ENCODE measurements at regions of chr13 and their contacts with region 1.

Region 1: DNA sequence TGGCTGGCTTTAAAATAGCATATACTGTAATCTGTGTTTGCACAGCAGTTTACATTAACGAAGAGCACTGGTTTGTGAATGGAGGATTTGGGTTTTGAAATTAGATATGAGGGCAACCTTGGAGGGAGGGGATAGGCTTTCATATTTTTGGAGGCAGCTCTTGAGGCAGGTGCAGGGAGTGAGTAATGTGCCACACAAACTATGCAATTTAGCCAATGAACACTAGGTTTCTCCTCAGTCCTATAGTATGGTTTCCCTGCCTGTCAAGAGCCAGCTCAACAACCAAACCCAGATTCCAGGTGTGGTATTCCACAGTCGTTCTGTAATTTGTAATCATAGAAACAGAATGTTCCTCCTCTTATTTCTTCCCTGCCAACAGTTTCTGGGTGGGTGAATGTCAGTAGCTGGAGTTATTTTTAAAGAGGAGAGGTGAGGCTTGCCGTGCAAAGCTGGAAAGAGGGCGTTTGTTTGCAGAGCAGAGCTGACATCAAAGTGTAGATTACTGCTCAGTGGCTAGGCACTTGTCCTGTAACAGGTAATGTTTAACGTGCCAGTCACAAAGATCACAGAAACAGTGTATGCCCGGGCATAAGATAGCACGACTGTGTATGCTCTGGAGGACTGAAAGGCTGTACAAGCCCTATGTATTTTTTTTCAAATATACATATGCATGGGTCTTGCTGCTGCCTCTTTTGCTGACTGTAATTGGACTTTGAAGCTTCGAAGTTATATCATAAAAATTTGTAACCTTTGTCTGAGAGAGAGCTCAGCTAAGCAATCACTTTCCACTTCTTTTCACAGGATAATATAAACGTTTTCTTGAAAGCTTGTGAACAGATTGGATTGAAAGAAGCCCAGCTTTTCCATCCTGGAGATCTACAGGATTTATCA is 124.2 kb downstream of the LMO7 start:
- DNase-seq: peak; percentile 76
- ATAC-seq: peak; percentile 87
- H3K4me3 ChIP-seq: peak overlapping the region; percentile 67
- H3K27ac ChIP-seq: peak overlapping the region; percentile 85
- H3K4me1 ChIP-seq: peaks cover 22% of the 10 kb centered on the region
- H3K27me3 ChIP-seq: no peaks in the 10 kb centered on the region
- CTCF ChIP-seq: peak; percentile 33

Region 2: GRCh38 chr13:75445717-75446499 is 314.5 kb before region 1 on chr13:
- CTCF ChIA-PET with region 1: no interaction called
- POLR2A ChIA-PET with region 1: no interaction called
- intact Hi-C with region 1: no loop called
- DNase-seq: peak; percentile 34
- ATAC-seq: no peak
- H3K4me3 ChIP-seq: no peak overlapping the region
- H3K27ac ChIP-seq: no peak overlapping the region
- H3K4me1 ChIP-seq: peaks cover 4% of the 10 kb centered on the region; the same call in 1 of the 2 replicates
- H3K27me3 ChIP-seq: no peaks in the 10 kb centered on the region
- CTCF ChIP-seq: no peak

Region 3: GRCh38 chr13:75530536-75530935 is 229.8 kb before region 1 on chr13:
- CTCF ChIA-PET with region 1: no interaction called
- POLR2A ChIA-PET with region 1: no interaction called
- intact Hi-C with region 1: no loop called
- DNase-seq: no peak
- ATAC-seq: no peak
- H3K4me3 ChIP-seq: no peak overlapping the region
- H3K27ac ChIP-seq: no peak overlapping the region
- H3K4me1 ChIP-seq: no peaks in the 10 kb centered on the region
- H3K27me3 ChIP-seq: no peaks in the 10 kb centered on the region
- CTCF ChIP-seq: no peak

Region 4: DNA sequence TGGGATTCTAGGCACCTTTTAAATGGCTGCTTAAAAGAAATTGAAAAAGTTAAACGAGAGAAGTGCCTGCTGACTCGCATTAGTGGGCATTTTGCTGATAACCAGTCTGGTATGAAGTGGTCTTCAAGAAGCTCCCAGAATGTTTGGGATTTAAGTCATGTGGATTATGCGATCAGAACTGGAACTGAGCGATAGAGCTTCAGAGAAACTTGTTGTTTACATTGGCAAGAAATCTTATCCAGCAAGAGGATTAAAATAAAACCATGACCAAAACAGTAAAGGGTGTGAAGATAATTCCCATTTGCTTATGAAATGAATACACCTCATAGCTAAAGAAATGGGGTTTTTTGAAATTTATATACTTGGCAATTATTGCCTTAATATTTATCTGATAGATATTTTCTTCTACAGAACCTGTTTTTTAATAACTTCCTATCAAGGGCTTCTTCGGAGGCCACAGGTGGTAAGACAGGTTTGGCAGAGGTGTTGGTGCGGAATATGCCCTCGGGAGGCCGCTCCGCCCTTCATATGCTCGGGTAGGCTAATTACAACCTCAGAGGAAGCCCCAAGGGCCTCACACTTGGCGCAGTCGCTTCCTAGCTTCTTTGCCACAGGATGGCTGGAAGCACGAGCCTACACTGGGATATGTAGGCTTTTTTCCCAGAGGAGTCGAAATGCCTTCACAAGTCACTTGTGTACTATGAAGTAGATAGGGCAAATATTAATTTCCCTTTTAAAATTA is 55.6 kb before region 1 on chr13:
- CTCF ChIA-PET with region 1: no interaction called
- POLR2A ChIA-PET with region 1: no interaction called
- intact Hi-C with region 1: loop called (anchors 1 kb)
- DNase-seq: peak; percentile 74
- ATAC-seq: peak; percentile 75
- H3K4me3 ChIP-seq: peak overlapping the region; percentile 53; the same call in 1 of the 2 replicates
- H3K27ac ChIP-seq: peak overlapping the region; percentile 100
- H3K4me1 ChIP-seq: peaks cover 34% of the 10 kb centered on the region
- H3K27me3 ChIP-seq: no peaks in the 10 kb centered on the region
- CTCF ChIP-seq: no peak

Region 5: GRCh38 chr13:75724752-75725504 is 35.4 kb before region 1 on chr13:
- CTCF ChIA-PET with region 1: interaction called, 4 read pairs
- POLR2A ChIA-PET with region 1: interaction called, 6 read pairs
- intact Hi-C with region 1: loop called (anchors 1 kb)
- DNase-seq: peak; percentile 70
- ATAC-seq: peak; percentile 80
- H3K4me3 ChIP-seq: peak overlapping the region; percentile 0; the same call in 1 of the 2 replicates
- H3K27ac ChIP-seq: peak overlapping the region; percentile 98
- H3K4me1 ChIP-seq: peaks cover 31% of the 10 kb centered on the region
- H3K27me3 ChIP-seq: no peaks in the 10 kb centered on the region
- CTCF ChIP-seq: no peak

Region 6: GRCh38 chr13:75798353-75799255 is 38.2 kb after region 1 on chr13:
- CTCF ChIA-PET with region 1: interaction called, 3 read pairs
- POLR2A ChIA-PET with region 1: interaction called, 4 read pairs
- intact Hi-C with region 1: loop called (anchors 5 kb)
- DNase-seq: peak; percentile 85
- ATAC-seq: peak; percentile 83
- H3K4me3 ChIP-seq: no peak overlapping the region
- H3K27ac ChIP-seq: peak overlapping the region; percentile 89
- H3K4me1 ChIP-seq: peaks cover 46% of the 10 kb centered on the region
- H3K27me3 ChIP-seq: no peaks in the 10 kb centered on the region
- CTCF ChIP-seq: no peak

Region 7: GRCh38 chr13:75861786-75862185 is 101.4 kb after region 1 on chr13:
- CTCF ChIA-PET with region 1: no interaction called
- POLR2A ChIA-PET with region 1: interaction called, 15 read pairs
- intact Hi-C with region 1: no loop called
- DNase-seq: no peak
- ATAC-seq: no peak
- H3K4me3 ChIP-seq: no peak overlapping the region
- H3K27ac ChIP-seq: no peak overlapping the region
- H3K4me1 ChIP-seq: peaks cover 21% of the 10 kb centered on the region
- H3K27me3 ChIP-seq: no peaks in the 10 kb centered on the region
- CTCF ChIP-seq: no peak

Region 8: GRCh38 chr13:77143435-77143834 is 1383.1 kb after region 1 on chr13:
- CTCF ChIA-PET with region 1: no interaction called
- POLR2A ChIA-PET with region 1: no interaction called
- intact Hi-C with region 1: no loop called
- DNase-seq: peak; percentile 87
- ATAC-seq: peak; percentile 99
- H3K4me3 ChIP-seq: no peak overlapping the region
- H3K27ac ChIP-seq: peak overlapping the region; percentile 59
- H3K4me1 ChIP-seq: peaks cover 15% of the 10 kb centered on the region
- H3K27me3 ChIP-seq: no peaks in the 10 kb centered on the region
- CTCF ChIP-seq: no peak

Measured in PC-3 (cell line).